ENCODE measurements at regions of chr5 and their contacts with region 1.

Region 1: DNA sequence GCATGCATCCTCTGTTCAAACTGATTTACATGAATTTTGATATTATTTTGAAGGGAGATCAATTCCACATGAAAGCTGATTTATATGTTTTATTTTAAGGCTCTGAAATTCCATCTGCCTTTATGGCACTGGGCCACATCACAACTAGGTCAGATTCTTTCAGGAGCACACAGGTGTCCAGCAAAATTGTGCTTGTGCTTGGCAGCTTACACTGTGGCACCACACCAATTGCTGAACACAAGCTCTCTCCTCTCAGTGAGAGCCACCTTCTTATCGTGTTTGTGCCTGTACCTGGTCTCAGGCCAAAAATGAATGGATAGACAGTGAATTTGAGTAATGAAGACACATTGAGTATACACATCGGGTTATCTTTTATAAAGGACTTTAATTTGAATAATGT is 200.4 kb downstream of the CDH10 start:
- DNase-seq: no peak
- ATAC-seq: no peak
- H3K4me3 ChIP-seq: no peak overlapping the region
- H3K27ac ChIP-seq: no peak overlapping the region
- H3K4me1 ChIP-seq: no peaks in the 10 kb centered on the region
- H3K27me3 ChIP-seq: no peaks in the 10 kb centered on the region
- CTCF ChIP-seq: no peak

Region 2: DNA sequence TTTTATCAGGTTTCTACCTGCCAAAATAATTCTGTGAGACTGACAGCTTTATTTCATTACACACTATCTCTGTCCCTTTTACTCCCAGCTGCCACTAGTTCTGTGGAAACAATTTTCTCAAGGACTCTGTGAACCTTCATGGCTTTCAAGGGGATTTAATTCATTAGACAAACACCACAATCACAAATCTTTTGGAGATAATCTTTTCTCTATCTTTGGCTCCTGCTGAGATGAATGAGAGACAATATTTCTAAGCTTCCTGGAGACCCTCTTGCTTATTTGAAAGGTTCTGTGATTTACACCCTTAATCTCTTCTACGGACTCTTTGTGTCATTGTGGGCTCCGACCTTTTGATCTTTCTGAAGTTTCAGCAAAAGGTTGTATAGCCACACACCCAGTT is 714.4 kb before region 1 on chr5:
- CTCF ChIA-PET with region 1: no interaction called
- POLR2A ChIA-PET with region 1: no interaction called
- intact Hi-C with region 1: no loop called
- DNase-seq: no peak
- ATAC-seq: no peak
- H3K4me3 ChIP-seq: no peak overlapping the region
- H3K27ac ChIP-seq: no peak overlapping the region
- H3K4me1 ChIP-seq: no peaks in the 10 kb centered on the region
- H3K27me3 ChIP-seq: no peaks in the 10 kb centered on the region
- CTCF ChIP-seq: no peak

Region 3: DNA sequence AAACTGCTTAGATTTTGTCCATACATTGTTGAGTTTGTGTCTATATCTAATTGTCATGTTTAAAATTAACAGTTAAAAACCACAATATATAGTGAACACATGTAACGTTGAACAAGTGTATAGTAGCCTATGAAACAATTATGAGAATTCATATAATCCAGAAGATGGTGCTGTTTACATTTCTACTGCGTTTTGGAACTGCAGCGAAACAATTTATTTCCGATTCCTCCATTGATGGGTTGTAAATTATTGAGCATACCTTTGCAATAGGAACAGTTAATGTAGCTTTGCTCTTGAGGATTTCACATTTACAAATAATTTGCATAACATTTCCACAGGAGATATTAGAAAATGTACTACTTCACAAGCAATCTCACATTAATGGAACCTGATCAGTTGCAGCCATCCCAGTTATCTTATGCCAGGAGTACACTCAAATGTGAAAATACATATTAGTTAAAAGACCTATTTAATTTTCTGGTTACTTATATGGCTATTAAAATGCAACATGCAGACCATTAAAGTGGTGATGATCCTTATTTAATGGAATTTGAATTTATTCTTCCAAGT is 211.4 kb before region 1 on chr5:
- CTCF ChIA-PET with region 1: no interaction called
- POLR2A ChIA-PET with region 1: no interaction called
- intact Hi-C with region 1: loop called (anchors 5 kb)
- DNase-seq: peak; percentile 39
- ATAC-seq: no peak; the same call in 1 of the 2 replicates
- H3K4me3 ChIP-seq: no peak overlapping the region
- H3K27ac ChIP-seq: no peak overlapping the region
- H3K4me1 ChIP-seq: no peaks in the 10 kb centered on the region
- H3K27me3 ChIP-seq: no peaks in the 10 kb centered on the region
- CTCF ChIP-seq: peak; percentile 72

Region 4: GRCh38 chr5:24535636-24536035 is 91.2 kb after region 1 on chr5:
- CTCF ChIA-PET with region 1: no interaction called
- POLR2A ChIA-PET with region 1: no interaction called
- intact Hi-C with region 1: loop called (anchors 1 kb)
- DNase-seq: peak; percentile 36
- ATAC-seq: peak; percentile 62
- H3K4me3 ChIP-seq: no peak overlapping the region
- H3K27ac ChIP-seq: no peak overlapping the region
- H3K4me1 ChIP-seq: no peaks in the 10 kb centered on the region
- H3K27me3 ChIP-seq: no peaks in the 10 kb centered on the region
- CTCF ChIP-seq: peak; percentile 54

Region 5: DNA sequence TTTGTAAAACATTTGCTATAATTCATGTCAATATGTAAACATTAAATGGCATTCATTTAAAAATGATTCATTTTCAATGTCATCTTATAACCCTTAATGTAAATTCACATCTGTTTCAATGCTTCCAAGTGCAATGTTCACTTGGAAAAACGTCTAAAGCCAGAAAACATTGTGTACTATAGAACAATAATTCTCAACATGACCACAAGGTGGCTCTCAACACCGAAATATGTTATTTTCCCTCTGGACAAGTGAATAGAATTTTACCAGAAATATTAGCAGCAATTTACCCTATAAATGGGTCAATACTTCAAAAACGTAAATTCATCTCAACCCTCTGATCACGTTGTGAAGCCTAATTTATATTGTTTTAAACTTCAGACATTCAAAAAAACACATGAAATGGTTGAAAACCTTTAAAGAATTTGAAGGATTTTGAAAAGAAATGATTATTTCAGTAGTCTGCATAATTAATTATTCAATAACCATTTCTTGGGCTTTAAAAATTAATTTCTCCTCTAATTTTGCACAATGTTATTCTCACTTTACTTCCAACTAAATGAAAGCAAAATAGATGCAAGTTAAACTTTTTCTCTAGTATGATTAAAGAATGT is 189.4 kb after region 1 on chr5:
- CTCF ChIA-PET with region 1: interaction called, 3 read pairs
- POLR2A ChIA-PET with region 1: no interaction called
- intact Hi-C with region 1: loop called (anchors 2 kb)
- DNase-seq: peak; percentile 77
- ATAC-seq: peak; percentile 45; the same call in 1 of the 2 replicates
- H3K4me3 ChIP-seq: no peak overlapping the region
- H3K27ac ChIP-seq: no peak overlapping the region
- H3K4me1 ChIP-seq: no peaks in the 10 kb centered on the region
- H3K27me3 ChIP-seq: no peaks in the 10 kb centered on the region
- CTCF ChIP-seq: peak; percentile 81

Region 6: DNA sequence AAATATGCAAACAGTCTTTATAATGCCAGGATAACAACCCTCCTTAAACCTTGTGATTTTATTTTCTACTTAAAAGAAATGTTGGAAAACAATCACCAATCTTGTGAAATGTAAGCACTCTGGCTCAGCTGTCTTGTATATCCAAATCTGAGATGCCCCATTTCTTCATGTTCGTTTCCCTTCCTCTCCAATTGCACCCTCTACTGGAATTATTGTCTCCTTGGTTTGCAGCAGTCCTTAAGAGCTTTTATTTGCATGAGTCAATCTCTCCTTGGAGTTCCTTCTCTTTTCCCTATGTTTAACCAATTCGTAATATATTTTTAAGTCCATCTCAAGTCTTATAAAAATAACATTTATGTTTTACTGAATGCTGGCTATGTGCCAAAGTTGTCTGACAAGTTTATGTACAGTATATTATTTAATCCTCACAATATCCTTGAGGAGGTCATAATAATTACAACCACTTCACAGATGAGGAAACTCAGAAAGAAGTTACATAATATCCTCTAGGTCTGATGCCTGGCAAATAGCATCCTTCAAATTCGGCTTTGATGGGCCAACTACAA is 562.4 kb after region 1 on chr5:
- CTCF ChIA-PET with region 1: no interaction called
- POLR2A ChIA-PET with region 1: no interaction called
- intact Hi-C with region 1: loop called (anchors 10 kb)
- DNase-seq: peak; percentile 84
- ATAC-seq: peak; percentile 73
- H3K4me3 ChIP-seq: no peak overlapping the region
- H3K27ac ChIP-seq: no peak overlapping the region
- H3K4me1 ChIP-seq: peaks cover 13% of the 10 kb centered on the region
- H3K27me3 ChIP-seq: no peaks in the 10 kb centered on the region
- CTCF ChIP-seq: peak; percentile 77